Activated CD8-positive, alpha-beta memory T cell treated with anti-CD3 and anti-CD28 coated beads, Interleukin-2, amount 10 ng/mL, durations not matched to agents 7 days and 5 days (primary cell): ENCODE measurements at regions of chr1 and their contacts with region 1.

Region 1: DNA sequence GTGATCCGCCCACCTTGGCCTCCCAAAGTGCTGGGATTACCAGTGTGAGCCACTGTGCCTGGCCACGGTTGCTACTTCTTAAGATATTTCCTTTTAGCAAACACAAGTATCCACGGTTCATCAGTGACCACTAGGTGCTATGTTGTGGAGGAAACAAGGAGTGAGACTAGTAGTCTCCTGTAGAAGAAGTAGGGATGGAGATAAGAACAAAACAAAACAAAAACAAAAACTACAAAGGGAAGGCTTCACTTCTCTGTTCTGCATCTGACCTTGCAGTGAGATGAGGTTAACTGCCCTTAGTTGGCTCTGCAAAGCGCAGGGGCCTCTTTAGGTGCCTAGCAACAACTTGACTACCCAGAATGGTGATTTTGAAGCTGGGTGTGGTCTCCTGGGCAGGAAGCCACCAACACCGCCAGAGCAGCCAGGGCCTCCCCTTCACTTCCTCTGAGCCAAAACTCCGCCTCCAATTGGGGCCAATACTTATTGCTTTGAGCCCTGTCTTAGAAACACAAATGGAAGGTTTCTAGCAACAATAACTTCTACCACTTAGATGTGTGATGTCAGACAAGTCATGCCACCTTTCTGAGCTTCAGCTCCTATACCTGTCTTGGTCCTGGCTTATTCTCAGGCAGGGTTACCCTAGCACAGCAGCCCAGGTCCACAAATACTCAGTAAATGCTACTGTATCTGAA is 12.8 kb upstream of the CDC42 start:
- DNase-seq: peak; percentile 98
- ATAC-seq: peak; percentile 98
- H3K4me3 Mint-ChIP-seq: peak overlapping the region; percentile 77
- H3K27ac Mint-ChIP-seq: peak overlapping the region; percentile 92
- H3K4me1 Mint-ChIP-seq: peaks cover 41% of the 10 kb centered on the region
- H3K27me3 Mint-ChIP-seq: no peaks in the 10 kb centered on the region

Region 2: DNA sequence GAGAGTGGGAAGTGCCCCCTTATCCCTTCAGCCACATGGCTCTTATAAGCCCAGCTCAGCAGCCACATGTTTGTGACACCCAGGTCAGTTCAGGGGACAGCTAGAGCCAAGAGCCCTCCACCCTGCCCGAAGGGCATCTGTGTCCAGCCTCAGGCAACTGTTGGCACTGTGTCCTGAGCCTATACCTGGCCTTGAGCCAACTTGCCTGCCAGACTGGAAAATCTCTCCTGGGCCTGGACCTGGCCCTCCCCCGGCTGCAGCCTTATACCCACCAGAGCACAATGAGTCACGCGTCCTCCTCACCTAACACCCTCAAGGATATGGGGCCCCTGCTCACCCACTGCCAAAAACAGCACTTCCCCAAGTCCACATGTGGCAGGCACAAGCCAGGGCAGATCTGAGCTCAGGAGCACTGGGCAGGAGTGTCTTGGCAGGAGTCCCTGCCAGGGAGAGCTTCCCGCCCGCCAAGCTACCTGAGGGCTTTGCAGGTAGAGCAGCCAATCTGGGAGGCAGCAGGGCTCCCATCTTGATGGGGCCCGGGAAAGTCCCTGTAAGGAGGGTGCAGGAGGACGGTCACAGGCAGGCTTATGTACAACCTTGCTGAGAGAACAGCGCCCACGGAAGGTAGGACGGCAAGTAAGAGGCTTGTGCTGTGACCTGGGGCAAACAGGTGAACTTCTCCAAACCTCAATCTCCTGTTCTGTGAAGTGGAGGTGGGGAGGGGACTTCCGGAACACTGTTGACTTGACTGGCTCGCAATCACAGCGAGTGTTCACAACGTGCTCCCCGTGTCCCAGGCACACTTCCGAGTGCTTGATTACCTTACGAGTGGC is 82.8 kb before region 1 on chr1:
- CTCF ChIA-PET with region 1: no interaction called
- DNase-seq: peak; percentile 50
- ATAC-seq: peak; percentile 64
- H3K4me3 Mint-ChIP-seq: no peak overlapping the region
- H3K27ac Mint-ChIP-seq: peak overlapping the region; percentile 14
- H3K4me1 Mint-ChIP-seq: peaks cover 27% of the 10 kb centered on the region
- H3K27me3 Mint-ChIP-seq: no peaks in the 10 kb centered on the region

Region 3: DNA sequence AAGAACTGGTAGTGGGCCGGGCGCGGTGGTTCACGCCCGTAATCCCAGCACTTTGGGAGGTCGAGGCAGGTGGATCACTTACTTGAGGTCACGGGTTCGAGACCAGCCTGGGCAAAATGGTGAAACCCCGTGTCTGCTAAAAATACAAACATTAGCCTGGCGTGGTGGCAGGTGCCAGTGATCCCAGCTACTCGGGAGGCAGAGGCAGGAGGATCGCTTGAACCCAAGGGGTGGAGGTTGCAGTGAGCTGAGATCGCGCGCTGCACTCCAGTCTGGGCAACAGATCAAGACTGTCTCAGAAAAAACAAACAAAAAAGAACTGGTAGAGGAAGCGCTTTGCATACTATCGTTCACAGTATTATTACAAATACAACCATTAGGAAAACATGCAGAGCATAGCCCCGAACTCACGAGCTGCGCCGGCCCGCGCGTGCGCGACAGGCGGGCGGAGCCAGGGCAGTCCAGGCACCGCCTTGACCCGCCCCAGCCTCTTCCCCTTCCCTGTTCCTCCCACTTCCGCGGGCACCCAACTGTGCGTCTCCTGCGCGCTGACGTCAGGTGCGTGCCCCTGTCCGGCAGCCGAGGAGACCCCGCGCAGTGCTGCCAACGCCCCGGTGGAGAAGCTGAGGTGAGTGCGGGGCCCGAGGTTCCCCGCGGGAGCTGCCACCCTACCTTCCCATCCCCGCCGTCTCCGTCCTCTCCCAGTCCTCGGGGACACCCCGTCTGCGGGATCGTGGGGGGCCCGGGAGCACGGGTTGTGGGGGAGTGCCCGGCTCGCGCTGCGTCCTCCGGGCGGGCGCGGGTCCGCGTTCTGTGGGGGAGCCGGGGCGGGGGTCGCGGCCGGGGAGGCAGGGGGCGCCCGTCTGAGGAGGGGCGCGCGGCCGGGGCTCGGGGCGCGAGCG is 12.6 kb after region 1 on chr1 and contains the start of gene CDC42:
- CTCF ChIA-PET with region 1: interaction called, 42 read pairs
- DNase-seq: peak; percentile 98
- ATAC-seq: peak; percentile 95
- H3K4me3 Mint-ChIP-seq: peak within 1 kb of the TSS; percentile 99
- H3K27ac Mint-ChIP-seq: peak within 1 kb of the TSS; percentile 99
- H3K4me1 Mint-ChIP-seq: peaks cover 59% of the 10 kb centered on the region
- H3K27me3 Mint-ChIP-seq: no peaks in the 10 kb centered on the region
- total RNA-seq, gene CDC42: 254 to 340 TPM